Natural killer cell (primary cell): ENCODE measurements at regions of chr7 and their contacts with region 1.

Region 1: DNA sequence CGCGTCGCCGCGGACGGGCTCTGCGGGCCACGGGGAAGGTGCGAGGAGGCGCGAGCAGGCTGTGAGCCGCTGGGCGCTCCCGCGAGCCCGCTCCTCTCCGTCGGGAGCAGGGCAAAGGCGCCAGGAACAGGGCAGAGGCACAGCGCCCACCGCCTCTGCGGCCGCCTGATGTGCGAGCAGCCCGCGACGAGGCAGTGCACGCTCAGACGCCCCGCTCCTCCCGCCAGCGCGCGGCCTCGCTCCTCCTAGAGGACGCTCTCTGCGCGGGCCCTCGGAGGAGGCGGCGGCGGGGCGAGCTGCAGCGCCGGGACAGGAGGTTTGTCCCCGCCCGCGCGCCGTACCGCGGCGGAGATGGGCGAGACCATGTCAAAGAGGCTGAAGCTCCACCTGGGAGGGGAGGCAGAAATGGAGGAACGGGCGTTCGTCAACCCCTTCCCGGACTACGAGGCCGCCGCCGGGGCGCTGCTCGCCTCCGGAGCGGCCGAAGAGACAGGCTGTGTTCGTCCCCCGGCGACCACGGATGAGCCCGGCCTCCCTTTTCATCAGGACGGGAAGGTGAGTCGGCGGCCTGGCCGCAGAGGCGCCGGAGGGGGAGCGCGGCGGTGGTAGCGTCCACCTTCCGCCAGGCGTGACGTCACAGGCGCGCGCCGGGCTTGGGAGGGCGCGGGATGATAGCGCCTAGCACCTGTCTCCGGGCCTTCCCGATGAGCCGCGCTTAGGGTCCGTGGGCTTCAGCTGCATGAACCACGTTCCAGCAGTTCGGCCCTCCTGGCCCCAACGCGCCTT is 731 bp downstream of the LANCL2 start:
- DNase-seq: peak; percentile 97 to 98
- ATAC-seq: peak; percentile 85 to 97 (median 88)
- H3K4me3 ChIP-seq: peak overlapping the region; percentile 89
- H3K4me3 Mint-ChIP-seq: peak overlapping the region; percentile 96
- H3K27ac ChIP-seq: peak overlapping the region; percentile 98
- H3K27ac Mint-ChIP-seq: peak overlapping the region; percentile 97 to 100
- H3K4me1 ChIP-seq: peaks cover 13% of the 10 kb centered on the region
- H3K4me1 Mint-ChIP-seq: peaks cover 20 to 32% of the 10 kb centered on the region in 2 donors
- H3K27me3 ChIP-seq: no peaks in the 10 kb centered on the region
- H3K27me3 Mint-ChIP-seq: peaks cover 9 to 11% of the 10 kb centered on the region in 2 donors
- CTCF ChIP-seq: peak; percentile 37

Region 2: DNA sequence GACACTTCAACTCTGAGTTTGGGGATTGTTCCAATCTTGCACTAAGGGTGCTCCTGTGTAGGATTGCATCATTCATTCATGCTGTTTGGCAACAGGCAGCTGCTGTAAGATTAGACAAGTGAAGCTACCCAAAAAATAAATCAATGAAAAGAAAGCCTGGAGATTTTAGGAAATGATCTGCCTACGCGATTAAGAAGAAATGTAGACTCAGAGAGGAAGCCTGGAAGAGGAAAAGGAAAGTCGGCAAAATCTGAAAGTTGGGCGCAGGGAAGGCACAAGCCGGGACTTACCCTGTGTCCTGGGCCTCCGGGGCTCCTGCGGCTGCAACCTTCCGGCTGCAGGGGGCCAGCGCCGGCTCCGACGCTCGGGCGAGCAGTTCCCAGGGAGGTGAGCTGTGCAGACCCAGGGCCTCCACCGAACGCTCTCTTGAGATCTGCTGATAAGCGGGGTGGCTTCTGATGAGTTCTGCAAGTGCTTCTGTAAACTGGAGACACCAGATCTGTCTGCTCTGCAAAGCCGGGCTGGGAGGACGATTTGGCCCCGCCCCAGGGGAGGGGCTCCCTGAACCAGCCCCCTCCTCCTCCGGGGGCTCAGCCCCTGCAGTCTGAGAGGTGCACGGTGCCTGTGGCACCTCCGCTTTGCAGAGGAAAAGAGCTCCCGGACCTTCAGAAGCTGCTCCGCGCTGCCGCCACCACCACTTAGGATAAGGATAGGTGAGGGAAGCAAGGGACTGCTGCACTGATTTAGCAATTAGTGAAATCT is 668.0 kb after region 1 on chr7:
- intact Hi-C with region 1: no loop called
- DNase-seq: peak; percentile 45 to 83
- ATAC-seq: peak; percentile 85 to 93 (median 91)
- H3K4me3 ChIP-seq: peak overlapping the region; percentile 62
- H3K4me3 Mint-ChIP-seq: peak overlapping the region; percentile 94
- H3K27ac ChIP-seq: no peak overlapping the region
- H3K27ac Mint-ChIP-seq: peak overlapping the region; percentile 8 to 73
- H3K4me1 ChIP-seq: peaks cover 2% of the 10 kb centered on the region
- H3K4me1 Mint-ChIP-seq: peaks cover 5 to 7% of the 10 kb centered on the region in 2 donors
- H3K27me3 ChIP-seq: no peaks in the 10 kb centered on the region
- H3K27me3 Mint-ChIP-seq: no peaks in the 10 kb centered on the region
- CTCF ChIP-seq: peak; percentile 24

Region 3: GRCh38 chr7:56063882-56064625 is 698.2 kb after region 1 on chr7 and contains the start of gene SUMF2:
- intact Hi-C with region 1: loop called (anchors 5 kb)
- DNase-seq: peak; percentile 92 to 97
- ATAC-seq: peak; percentile 88 to 94 (median 94)
- H3K4me3 ChIP-seq: peak within 1 kb of the TSS; percentile 99
- H3K4me3 Mint-ChIP-seq: peak within 1 kb of the TSS; percentile 95
- H3K27ac ChIP-seq: peak within 1 kb of the TSS; percentile 84
- H3K27ac Mint-ChIP-seq: peak within 1 kb of the TSS; percentile 95 to 98
- H3K4me1 ChIP-seq: peaks cover 14% of the 10 kb centered on the region
- H3K4me1 Mint-ChIP-seq: peaks cover 27 to 31% of the 10 kb centered on the region in 2 donors
- H3K27me3 ChIP-seq: no peaks in the 10 kb centered on the region
- H3K27me3 Mint-ChIP-seq: no peaks in the 10 kb centered on the region
- CTCF ChIP-seq: no peak
- total RNA-seq, gene SUMF2: 130 to 147 (median 136) TPM